K562 (cell line): ENCODE measurements at regions of chr4 and their contacts with region 1.

Region 1: GRCh38 chr4:40672536-40673526 is 43.2 kb upstream of the RBM47 start:
- DNase-seq: peak in 3 of 4 experiments; percentile 15 to 37 (median 36)
- ATAC-seq: peak; percentile 86
- H3K4me3 ChIP-seq: no peak overlapping the region
- H3K27ac ChIP-seq: no peak overlapping the region
- H3K4me1 ChIP-seq: peaks cover 0 to 8% of the 10 kb centered on the region in 2 experiments; a peak in 2 of 5 replicates
- H3K27me3 ChIP-seq: peaks cover 7 to 23% of the 10 kb centered on the region in 2 experiments; a peak in 4 of 5 replicates
- CTCF ChIP-seq: no peak
- EP300 ChIP-seq: no peak
- POLR2A ChIP-seq: no peak
- RAD21 ChIP-seq: no peak

Region 2: GRCh38 chr4:41012293-41012692 is 339.5 kb after region 1 on chr4:
- CTCF ChIA-PET with region 1: no interaction called
- POLR2A ChIA-PET with region 1: no interaction called
- in situ Hi-C with region 1: no loop called
- intact Hi-C with region 1: loop called (anchors 5 kb)
- DNase-seq: no peak
- ATAC-seq: no peak
- H3K4me3 ChIP-seq: no peak overlapping the region
- H3K27ac ChIP-seq: no peak overlapping the region
- H3K4me1 ChIP-seq: no peaks in the 10 kb centered on the region; a peak in 1 of 5 replicates
- H3K27me3 ChIP-seq: peaks cover 0 to 9% of the 10 kb centered on the region in 2 experiments; a peak in 1 of 5 replicates
- CTCF ChIP-seq: no peak
- EP300 ChIP-seq: no peak
- POLR2A ChIP-seq: no peak
- RAD21 ChIP-seq: no peak